ENCODE measurements at regions of chr3 and their contacts with region 1.

Region 1: DNA sequence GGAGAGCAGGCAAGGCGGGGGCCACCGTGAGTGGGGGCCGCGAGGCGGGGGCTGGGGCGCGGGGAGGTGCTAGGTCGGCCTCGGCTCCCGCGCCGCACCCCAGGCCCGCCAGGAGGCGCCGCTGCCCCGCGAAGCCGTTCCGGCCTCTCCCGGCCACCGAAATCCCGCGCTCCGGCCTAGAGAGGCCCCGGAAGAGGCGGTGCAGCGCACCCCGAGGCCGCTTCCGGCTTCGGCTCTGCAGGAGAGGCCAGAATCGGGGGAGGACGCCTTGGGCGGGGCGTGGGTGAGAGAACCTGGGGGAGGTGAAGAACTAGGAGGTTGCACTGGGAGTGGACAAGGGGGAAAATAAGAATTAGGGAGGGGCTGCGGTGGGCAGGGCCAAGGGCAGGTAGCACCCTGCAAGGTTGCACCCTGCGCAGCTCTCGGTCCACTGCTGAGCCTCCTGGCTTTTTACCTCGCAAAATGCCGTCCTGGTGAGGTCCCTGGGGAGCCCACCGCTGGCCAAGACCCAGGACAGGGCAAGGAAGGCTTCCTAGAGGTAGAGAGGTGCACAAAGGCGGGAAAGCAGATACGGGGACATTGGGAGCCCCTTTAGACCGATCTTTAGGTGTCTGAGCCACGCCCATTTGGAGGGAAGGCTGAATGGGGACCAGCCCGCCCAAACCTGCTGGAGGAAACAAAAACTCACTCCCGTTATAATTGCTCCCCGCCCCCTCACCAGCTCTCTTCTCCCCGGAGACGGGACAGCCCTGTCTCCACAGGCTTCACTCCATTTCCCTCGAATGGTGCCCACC is 8.4 kb upstream of the GNAI2 start:
- DNase-seq: peak; percentile 93 to 98
- H3K4me3 ChIP-seq: peak overlapping the region; percentile 64
- H3K27ac ChIP-seq: peak overlapping the region; percentile 34; the same call in 1 of the 2 replicates
- H3K4me1 ChIP-seq: peaks cover 12% of the 10 kb centered on the region
- H3K27me3 ChIP-seq: no peaks in the 10 kb centered on the region
- CTCF ChIP-seq: peak; percentile 66

Region 2: GRCh38 chr3:48507351-48508061 is 1720.1 kb before region 1 on chr3:
- CTCF ChIA-PET with region 1: interaction called, 13 read pairs
- POLR2A ChIA-PET with region 1: no interaction called
- intact Hi-C with region 1: no loop called
- DNase-seq: peak; percentile 95 to 99
- H3K4me3 ChIP-seq: no peak overlapping the region; the same call in 1 of the 2 replicates
- H3K27ac ChIP-seq: peak overlapping the region; percentile 92
- H3K4me1 ChIP-seq: peaks cover 54% of the 10 kb centered on the region
- H3K27me3 ChIP-seq: no peaks in the 10 kb centered on the region
- CTCF ChIP-seq: no peak; the same call in 1 of the 2 replicates

Region 3: DNA sequence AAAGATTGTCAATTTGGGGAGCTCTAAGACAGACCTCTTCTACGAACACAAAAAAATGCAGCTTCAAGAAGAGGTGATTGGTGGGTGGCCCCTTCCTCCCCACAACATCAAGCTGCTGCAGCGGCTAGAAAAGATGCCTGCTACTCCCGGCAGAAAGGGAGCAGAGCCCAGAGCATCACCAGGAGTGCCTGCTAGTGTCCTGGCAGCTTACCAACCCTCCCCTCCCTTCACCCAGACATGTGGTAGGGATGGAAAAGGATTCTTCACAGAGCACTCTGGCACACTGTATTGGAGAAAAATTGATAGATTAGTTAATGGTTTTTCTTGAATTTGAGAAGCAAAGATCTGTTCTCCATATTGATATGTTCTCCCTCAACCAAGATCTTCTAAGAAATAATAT is 452.0 kb before region 1 on chr3:
- CTCF ChIA-PET with region 1: no interaction called
- POLR2A ChIA-PET with region 1: no interaction called
- intact Hi-C with region 1: no loop called
- DNase-seq: no peak
- H3K4me3 ChIP-seq: no peak overlapping the region
- H3K27ac ChIP-seq: no peak overlapping the region
- H3K4me1 ChIP-seq: no peaks in the 10 kb centered on the region
- H3K27me3 ChIP-seq: no peaks in the 10 kb centered on the region
- CTCF ChIP-seq: no peak

Region 4: GRCh38 chr3:50163572-50164455 is 63.8 kb before region 1 on chr3:
- CTCF ChIA-PET with region 1: no interaction called
- POLR2A ChIA-PET with region 1: no interaction called
- intact Hi-C with region 1: no loop called
- DNase-seq: peak; percentile 85 to 90
- H3K4me3 ChIP-seq: no peak overlapping the region
- H3K27ac ChIP-seq: no peak overlapping the region
- H3K4me1 ChIP-seq: peaks cover 38% of the 10 kb centered on the region
- H3K27me3 ChIP-seq: no peaks in the 10 kb centered on the region
- CTCF ChIP-seq: no peak

Region 5: DNA sequence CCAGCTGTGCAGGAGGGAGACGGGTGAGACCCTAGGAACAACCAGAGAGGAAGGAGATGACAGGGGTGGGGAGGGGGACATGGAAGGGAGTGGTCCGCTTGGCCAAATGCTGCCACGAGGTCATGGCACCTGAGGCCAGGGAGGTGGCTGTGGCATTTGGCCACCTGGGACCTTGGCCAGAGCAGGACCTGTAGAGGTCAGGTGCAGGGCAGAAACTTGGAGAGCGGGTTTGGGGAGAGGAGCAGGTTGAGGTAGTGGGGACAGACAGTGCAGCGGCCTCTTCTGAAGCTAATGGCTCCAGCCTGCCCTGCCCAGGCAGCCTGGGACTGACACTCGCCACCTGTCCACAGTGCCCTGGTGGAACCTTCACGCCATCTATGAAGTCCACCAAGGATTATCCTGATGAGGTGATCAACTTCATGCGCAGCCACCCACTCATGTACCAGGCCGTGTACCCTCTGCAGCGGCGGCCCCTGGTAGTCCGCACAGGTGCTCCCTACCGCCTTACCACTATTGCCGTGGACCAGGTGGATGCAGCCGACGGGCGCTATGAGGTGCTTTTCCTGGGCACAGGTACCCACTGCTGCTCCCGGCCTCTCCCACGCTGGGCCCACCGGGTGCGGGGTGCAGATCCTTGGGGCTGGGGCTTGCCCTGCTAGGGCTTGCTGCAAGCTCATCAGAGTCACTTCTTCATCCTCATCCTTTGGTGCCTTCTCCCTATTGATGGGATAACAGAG is 43.2 kb before region 1 on chr3:
- CTCF ChIA-PET with region 1: interaction called, 3 read pairs
- POLR2A ChIA-PET with region 1: interaction called, 10 read pairs
- intact Hi-C with region 1: no loop called
- DNase-seq: peak; percentile 76 to 83
- H3K4me3 ChIP-seq: no peak overlapping the region
- H3K27ac ChIP-seq: no peak overlapping the region
- H3K4me1 ChIP-seq: peaks cover 16% of the 10 kb centered on the region
- H3K27me3 ChIP-seq: no peaks in the 10 kb centered on the region
- CTCF ChIP-seq: no peak

Region 6: DNA sequence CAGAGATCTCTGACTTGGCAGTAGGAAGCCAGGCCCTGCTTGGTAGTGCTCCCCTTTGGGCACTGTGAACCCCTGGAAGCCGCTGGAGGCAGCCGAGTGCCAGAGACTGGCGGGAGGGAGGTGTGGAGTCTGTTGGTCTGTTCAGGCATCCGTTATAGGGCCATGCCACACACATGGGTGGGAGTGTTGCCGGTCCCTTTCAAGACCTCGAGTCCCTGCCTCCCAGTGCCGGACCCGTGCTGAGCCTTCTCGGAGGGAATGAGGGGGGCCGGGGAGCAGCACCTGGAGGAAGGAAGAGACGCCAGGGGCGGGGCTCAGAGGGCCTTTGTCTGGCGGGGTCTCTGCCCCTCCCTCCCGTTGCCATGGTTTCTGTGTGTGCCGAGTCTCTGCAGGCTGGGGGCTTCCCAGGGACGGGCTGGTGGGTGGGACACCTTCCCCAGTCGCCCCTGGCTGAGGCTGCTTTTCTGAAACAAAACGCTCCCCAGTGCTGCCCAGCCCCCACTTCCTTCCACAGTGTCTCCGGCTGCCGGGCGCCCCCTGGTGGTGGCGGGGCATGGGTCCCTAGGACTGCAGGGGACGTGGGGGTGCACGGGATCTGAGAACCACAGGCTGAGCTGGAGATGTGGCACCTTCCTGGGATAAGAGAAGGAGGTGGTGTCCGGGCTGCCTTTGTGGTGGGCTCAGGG is 18.4 kb after region 1 on chr3:
- CTCF ChIA-PET with region 1: interaction called, 7 read pairs
- POLR2A ChIA-PET with region 1: interaction called, 5 read pairs
- intact Hi-C with region 1: loop called (anchors 1 kb)
- DNase-seq: peak; percentile 64 to 91
- H3K4me3 ChIP-seq: peak overlapping the region; percentile 6; the same call in 1 of the 2 replicates
- H3K27ac ChIP-seq: peak overlapping the region; percentile 84
- H3K4me1 ChIP-seq: peaks cover 33% of the 10 kb centered on the region
- H3K27me3 ChIP-seq: no peaks in the 10 kb centered on the region
- CTCF ChIP-seq: peak; percentile 96

Region 7: GRCh38 chr3:50272911-50273693 is 45.5 kb after region 1 on chr3:
- CTCF ChIA-PET with region 1: interaction called, 4 read pairs
- POLR2A ChIA-PET with region 1: interaction called, 16 read pairs
- intact Hi-C with region 1: loop called (anchors 1 kb)
- DNase-seq: peak; percentile 61 to 85
- H3K4me3 ChIP-seq: no peak overlapping the region
- H3K27ac ChIP-seq: no peak overlapping the region
- H3K4me1 ChIP-seq: peaks cover 44% of the 10 kb centered on the region
- H3K27me3 ChIP-seq: no peaks in the 10 kb centered on the region
- CTCF ChIP-seq: peak; percentile 91

Region 8: DNA sequence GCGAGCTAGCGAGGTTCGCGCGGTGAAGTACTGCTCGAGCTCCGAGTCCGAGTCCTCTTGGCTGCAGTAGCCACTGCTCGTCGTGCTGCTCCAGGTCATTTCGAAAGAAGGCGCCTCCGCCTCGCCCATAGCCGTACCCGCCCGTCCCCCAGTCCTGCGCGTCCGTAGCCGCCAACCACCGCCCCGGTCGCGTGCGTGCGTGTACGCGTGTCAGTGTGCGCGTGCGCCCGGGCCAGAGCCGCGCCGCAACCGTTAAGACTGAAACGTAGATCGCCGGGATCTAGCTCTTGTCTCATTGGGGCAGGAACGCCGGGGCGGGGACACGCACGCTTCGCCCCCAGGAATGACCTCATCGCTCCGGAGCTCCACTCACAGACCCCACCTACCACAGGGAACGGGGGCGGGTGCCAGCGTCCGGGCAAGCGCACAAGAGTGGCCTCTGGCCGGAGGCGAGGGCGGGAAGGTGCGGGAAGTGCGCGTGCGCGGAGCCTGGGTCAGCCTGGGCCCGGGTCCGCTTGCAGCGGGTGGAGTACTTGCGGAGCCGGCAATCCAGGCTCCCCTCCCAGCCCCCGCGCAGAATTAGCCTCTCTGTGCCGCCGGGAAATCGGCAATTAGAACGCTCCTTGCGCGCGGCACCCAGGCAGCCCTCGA is 109.7 kb after region 1 on chr3:
- CTCF ChIA-PET with region 1: interaction called, 3 read pairs
- POLR2A ChIA-PET with region 1: no interaction called
- intact Hi-C with region 1: loop called (anchors 5 kb)
- DNase-seq: peak; percentile 92 to 99
- H3K4me3 ChIP-seq: peak overlapping the region; percentile 83
- H3K27ac ChIP-seq: peak overlapping the region; percentile 64
- H3K4me1 ChIP-seq: peaks cover 25% of the 10 kb centered on the region
- H3K27me3 ChIP-seq: no peaks in the 10 kb centered on the region
- CTCF ChIP-seq: no peak

Measured in PC-9 (cell line).